GM12878 (cell line): ENCODE measurements at regions of chr1 and their contacts with region 1.

Region 1: GRCh38 chr1:183821889-183822611 is 17.1 kb downstream of the RGL1 start:
- DNase-seq: no peak
- ATAC-seq: peak; percentile 32; the same call in 2 of the 3 replicates
- H3K4me3 ChIP-seq: no peak overlapping the region
- H3K27ac ChIP-seq: no peak overlapping the region
- H3K4me1 ChIP-seq: peaks cover 9% of the 10 kb centered on the region
- H3K27me3 ChIP-seq: no peaks in the 10 kb centered on the region
- CTCF ChIP-seq: no peak
- EP300 ChIP-seq: no peak
- POLR2A ChIP-seq: no peak
- RAD21 ChIP-seq: no peak

Region 2: DNA sequence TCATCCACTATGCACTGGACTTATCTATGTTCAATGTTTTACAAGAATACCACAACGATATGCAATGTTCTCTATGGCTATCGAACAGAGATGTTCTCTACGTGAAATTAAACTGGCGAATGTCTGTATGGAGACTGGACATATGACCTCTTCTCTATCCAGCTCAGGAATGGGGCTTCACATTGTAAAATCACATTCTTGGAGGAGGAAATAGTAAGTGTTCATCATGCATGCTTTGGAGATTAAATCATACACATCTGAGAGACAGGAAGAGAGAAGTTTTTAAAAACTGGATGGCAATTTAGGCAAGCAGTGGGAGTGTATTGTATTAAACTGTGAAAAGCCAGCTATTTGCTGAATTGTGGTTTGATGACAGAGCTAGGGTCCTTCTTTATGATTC is 65.0 kb before region 1 on chr1:
- CTCF ChIA-PET with region 1: no interaction called
- POLR2A ChIA-PET with region 1: no interaction called
- RAD21 ChIA-PET with region 1: no interaction called
- SMC1A ChIA-PET with region 1: no interaction called
- in situ Hi-C with region 1: no loop called
- intact Hi-C with region 1: no loop called
- DNase-seq: no peak
- ATAC-seq: no peak
- H3K4me3 ChIP-seq: no peak overlapping the region
- H3K27ac ChIP-seq: no peak overlapping the region
- H3K4me1 ChIP-seq: no peaks in the 10 kb centered on the region
- H3K27me3 ChIP-seq: no peaks in the 10 kb centered on the region
- CTCF ChIP-seq: no peak
- EP300 ChIP-seq: no peak
- POLR2A ChIP-seq: no peak
- RAD21 ChIP-seq: no peak

Region 3: DNA sequence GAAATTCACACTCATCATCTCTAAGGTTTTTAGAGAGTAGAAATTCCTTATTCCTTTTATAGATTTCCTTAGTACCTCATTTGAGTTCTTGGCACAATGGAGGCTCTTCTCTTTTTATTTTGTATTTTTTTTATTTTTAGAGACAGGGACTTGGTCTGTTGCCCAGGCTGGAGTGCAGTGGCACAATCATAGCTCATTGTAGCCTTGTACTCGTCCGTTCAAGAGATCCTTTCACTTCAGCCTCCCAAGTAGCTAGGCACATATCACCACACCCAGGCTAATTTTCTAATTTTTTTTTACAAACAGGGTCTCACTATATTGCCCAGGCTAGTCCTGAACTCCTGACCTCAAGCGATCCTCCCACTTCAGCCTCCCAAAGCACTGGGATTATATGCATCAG is 12.5 kb after region 1 on chr1:
- CTCF ChIA-PET with region 1: interaction called, 15 read pairs
- POLR2A ChIA-PET with region 1: interaction called, 5 read pairs
- RAD21 ChIA-PET with region 1: interaction called, 3 read pairs
- SMC1A ChIA-PET with region 1: interaction called, 37 read pairs
- in situ Hi-C with region 1: no loop called
- intact Hi-C with region 1: no loop called
- DNase-seq: no peak
- ATAC-seq: no peak
- H3K4me3 ChIP-seq: no peak overlapping the region
- H3K27ac ChIP-seq: no peak overlapping the region
- H3K4me1 ChIP-seq: peaks cover 14% of the 10 kb centered on the region
- H3K27me3 ChIP-seq: no peaks in the 10 kb centered on the region
- CTCF ChIP-seq: no peak
- EP300 ChIP-seq: no peak
- POLR2A ChIP-seq: no peak
- RAD21 ChIP-seq: no peak